IMR-90 (cell line): ENCODE measurements at regions of chr18 and their contacts with region 1.

Region 1: GRCh38 chr18:46080156-46080555 is 8.1 kb upstream of the PSTPIP2 start:
- DNase-seq: no peak
- ATAC-seq: no peak
- H3K4me3 ChIP-seq: no peak overlapping the region
- H3K27ac ChIP-seq: no peak overlapping the region
- H3K4me1 ChIP-seq: peaks cover 2% of the 10 kb centered on the region; the same call in 1 of the 2 replicates
- H3K27me3 ChIP-seq: no peaks in the 10 kb centered on the region
- CTCF ChIP-seq: no peak
- POLR2A ChIP-seq: no peak
- RAD21 ChIP-seq: no peak

Region 2: GRCh38 chr18:45416168-45416567 is 664.0 kb before region 1 on chr18:
- CTCF ChIA-PET with region 1: no interaction called
- POLR2A ChIA-PET with region 1: no interaction called
- dilution Hi-C with region 1: no loop called
- in situ Hi-C with region 1: no loop called
- intact Hi-C with region 1: no loop called
- DNase-seq: no peak
- ATAC-seq: no peak
- H3K4me3 ChIP-seq: no peak overlapping the region
- H3K27ac ChIP-seq: no peak overlapping the region
- H3K4me1 ChIP-seq: no peaks in the 10 kb centered on the region
- H3K27me3 ChIP-seq: peaks cover 2% of the 10 kb centered on the region; the same call in 1 of the 2 replicates
- CTCF ChIP-seq: no peak
- POLR2A ChIP-seq: no peak
- RAD21 ChIP-seq: no peak

Region 3: DNA sequence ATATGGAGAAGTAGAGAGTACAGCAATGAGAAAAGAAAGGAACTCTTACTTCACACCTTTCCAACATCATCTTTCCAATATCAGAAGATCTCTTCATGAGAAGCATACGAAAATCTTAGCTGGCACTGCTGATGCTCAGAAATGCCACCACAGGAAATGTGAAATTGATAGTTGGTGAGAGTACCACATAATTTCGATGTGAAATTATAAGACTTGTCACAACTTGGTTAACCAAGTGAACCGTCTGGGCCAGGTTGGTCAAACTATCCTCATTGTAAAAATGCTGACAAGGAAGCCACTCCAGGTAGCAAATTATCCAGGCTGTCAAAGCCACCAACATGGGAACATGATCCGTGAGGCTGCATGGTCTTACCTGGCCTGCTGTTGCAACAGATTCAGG is 179.5 kb before region 1 on chr18:
- CTCF ChIA-PET with region 1: no interaction called
- POLR2A ChIA-PET with region 1: no interaction called
- dilution Hi-C with region 1: no loop called
- in situ Hi-C with region 1: no loop called
- intact Hi-C with region 1: loop called (anchors 5 kb)
- DNase-seq: no peak
- ATAC-seq: no peak
- H3K4me3 ChIP-seq: no peak overlapping the region
- H3K27ac ChIP-seq: no peak overlapping the region
- H3K4me1 ChIP-seq: no peaks in the 10 kb centered on the region
- H3K27me3 ChIP-seq: no peaks in the 10 kb centered on the region
- CTCF ChIP-seq: no peak
- POLR2A ChIP-seq: no peak
- RAD21 ChIP-seq: no peak

Region 4: DNA sequence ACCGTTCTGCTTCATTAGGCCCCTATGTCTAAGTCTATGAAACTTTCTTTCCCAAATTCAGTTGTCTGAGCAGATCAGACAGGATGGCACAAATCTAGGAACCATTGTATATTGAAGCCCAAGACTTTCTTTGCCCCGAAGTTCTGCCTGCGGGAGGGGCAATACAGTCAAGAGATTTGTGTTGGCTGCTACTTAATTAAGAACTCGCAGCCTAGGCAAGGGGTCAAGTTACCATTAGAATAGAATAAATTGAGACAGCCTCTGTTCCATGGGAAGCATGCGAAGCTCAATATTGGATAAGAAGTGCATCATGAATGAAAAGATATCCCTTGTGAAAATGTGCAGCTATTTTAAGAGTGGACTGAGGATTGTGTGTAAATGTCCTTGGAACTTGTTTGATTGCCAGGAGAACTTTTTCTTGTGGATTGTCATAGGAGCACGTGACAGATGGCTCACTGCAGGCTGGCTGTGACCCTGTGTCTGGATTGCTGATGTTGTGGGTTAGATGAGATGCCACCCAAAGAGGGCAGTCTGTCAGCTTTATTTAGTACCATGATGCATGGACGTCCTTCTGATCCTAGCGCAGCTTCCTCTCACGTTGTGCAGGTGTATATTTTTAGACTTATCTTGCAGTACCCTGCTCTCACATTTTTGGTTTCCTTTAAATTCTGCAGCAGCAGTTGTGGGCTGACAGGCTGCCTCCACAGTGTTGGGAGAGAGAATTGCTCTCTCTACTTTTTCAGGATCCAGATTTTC is 54.9 kb after region 1 on chr18:
- CTCF ChIA-PET with region 1: no interaction called
- POLR2A ChIA-PET with region 1: no interaction called
- dilution Hi-C with region 1: no loop called
- in situ Hi-C with region 1: no loop called
- intact Hi-C with region 1: no loop called
- DNase-seq: no peak
- ATAC-seq: no peak
- H3K4me3 ChIP-seq: no peak overlapping the region
- H3K27ac ChIP-seq: no peak overlapping the region
- H3K4me1 ChIP-seq: no peaks in the 10 kb centered on the region
- H3K27me3 ChIP-seq: no peaks in the 10 kb centered on the region
- CTCF ChIP-seq: no peak
- POLR2A ChIP-seq: no peak
- RAD21 ChIP-seq: no peak

Region 5: GRCh38 chr18:46250812-46251173 is 170.6 kb after region 1 on chr18:
- CTCF ChIA-PET with region 1: no interaction called
- POLR2A ChIA-PET with region 1: no interaction called
- dilution Hi-C with region 1: no loop called
- in situ Hi-C with region 1: no loop called
- intact Hi-C with region 1: no loop called
- DNase-seq: no peak
- ATAC-seq: peak; percentile 32
- H3K4me3 ChIP-seq: no peak overlapping the region
- H3K27ac ChIP-seq: peak overlapping the region; percentile 15; the same call in 1 of the 2 replicates
- H3K4me1 ChIP-seq: peaks cover 8% of the 10 kb centered on the region
- H3K27me3 ChIP-seq: no peaks in the 10 kb centered on the region
- CTCF ChIP-seq: no peak
- POLR2A ChIP-seq: no peak
- RAD21 ChIP-seq: no peak